ENCODE measurements at regions of chr14 and their contacts with region 1.

Region 1: DNA sequence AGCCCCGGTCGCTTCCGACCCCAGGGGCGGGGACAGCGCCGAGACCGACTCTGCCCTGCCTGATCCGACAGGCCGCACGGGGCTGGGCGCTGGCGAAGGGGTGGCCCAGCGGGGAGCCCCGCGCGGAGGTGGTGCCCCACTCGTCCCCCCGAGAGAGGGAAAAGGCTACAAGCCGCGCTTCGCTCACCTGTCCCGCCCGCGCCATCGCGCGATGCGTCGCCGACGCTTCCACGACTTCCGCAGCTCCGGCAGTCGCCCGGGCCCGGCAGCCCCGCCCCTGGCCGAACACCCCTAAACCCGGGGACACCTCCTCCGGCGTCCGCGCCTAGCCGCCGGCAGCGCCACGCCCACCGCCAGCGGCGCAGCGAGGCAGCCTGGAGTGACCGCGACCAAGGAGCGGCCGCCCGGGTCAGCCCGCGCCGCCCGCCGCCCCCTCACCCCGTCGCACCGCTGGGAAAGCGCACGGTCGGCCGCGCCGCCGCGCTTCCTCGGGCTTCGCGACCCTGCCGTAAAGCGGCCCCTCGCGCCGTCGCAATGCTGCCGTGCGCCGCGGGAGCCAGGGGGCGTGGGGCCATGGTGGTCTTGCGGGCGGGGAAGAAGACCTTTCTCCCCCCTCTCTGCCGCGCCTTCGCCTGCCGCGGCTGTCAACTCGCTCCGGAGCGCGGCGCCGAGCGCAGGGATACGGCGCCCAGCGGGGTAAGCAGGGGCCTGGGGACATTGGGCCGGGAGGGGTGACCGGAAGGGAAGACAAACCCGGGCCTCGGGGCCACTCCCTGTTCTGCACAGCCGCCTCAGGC is at the starts of genes BAG5 and COA8:
- DNase-seq: peak; percentile 86 to 98
- H3K4me3 ChIP-seq: peak within 1 kb of the TSS; percentile 87
- H3K27ac ChIP-seq: peak within 1 kb of the TSS; percentile 76
- H3K4me1 ChIP-seq: peaks cover 49% of the 10 kb centered on the region
- H3K27me3 ChIP-seq: no peaks in the 10 kb centered on the region
- CTCF ChIP-seq: peak; percentile 31; the same call in 1 of the 2 replicates
- total RNA-seq, gene BAG5: 61.5 and 76.5 TPM in 2 replicates
- total RNA-seq, gene COA8: 93.8 and 101 TPM in 2 replicates

Region 2: GRCh38 chr14:101908795-101909194 is 1653.8 kb before region 1 on chr14:
- CTCF ChIA-PET with region 1: no interaction called
- POLR2A ChIA-PET with region 1: no interaction called
- intact Hi-C with region 1: no loop called
- DNase-seq: no peak
- H3K4me3 ChIP-seq: no peak overlapping the region
- H3K27ac ChIP-seq: no peak overlapping the region
- H3K4me1 ChIP-seq: no peaks in the 10 kb centered on the region
- H3K27me3 ChIP-seq: no peaks in the 10 kb centered on the region
- CTCF ChIP-seq: no peak

Region 3: DNA sequence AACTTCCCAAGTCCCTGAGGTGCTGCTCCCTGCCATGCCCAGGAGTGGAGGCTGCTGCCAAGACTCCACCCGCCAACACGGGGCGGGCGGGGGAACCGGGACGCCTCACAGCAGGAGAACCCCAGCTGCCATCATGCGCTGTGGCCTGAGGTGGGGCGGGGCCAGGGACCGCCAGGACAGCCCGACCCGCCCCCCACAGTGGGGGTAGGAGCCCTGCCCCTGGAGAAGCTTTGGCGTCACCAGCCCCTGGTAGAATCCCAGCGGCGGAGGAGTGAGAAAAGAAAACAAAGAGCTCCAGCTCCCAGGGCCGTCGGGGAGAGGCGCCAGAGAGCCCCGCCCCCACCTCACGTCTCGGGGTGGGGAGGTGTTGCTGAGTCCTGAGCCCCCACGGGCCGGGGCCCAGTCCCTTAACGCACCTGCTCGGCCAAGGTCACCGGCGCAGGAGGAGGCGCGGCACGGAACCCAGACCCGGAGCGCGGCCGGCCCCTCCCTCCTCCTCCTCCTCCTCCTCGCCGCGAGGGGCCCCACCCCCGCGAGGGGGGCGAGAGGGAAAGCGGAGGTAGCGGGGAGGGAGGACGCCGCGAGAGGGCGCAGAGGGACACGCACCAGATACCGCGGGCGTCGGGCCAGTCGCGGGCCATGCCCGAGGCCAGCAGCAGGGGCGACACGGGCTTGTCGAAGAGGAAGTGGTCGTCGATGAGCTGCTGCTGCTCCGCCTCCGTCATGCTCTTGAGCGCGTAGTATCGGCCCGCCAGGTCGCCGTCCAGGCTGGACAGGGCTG is 41.8 kb before region 1 on chr14:
- CTCF ChIA-PET with region 1: interaction called, 6 read pairs
- POLR2A ChIA-PET with region 1: interaction called, 5 read pairs
- intact Hi-C with region 1: loop called (anchors 5 kb)
- DNase-seq: peak; percentile 82 to 95
- H3K4me3 ChIP-seq: peak overlapping the region; percentile 66
- H3K27ac ChIP-seq: peak overlapping the region; percentile 16
- H3K4me1 ChIP-seq: peaks cover 11% of the 10 kb centered on the region
- H3K27me3 ChIP-seq: no peaks in the 10 kb centered on the region
- CTCF ChIP-seq: peak; percentile 81

Region 4: DNA sequence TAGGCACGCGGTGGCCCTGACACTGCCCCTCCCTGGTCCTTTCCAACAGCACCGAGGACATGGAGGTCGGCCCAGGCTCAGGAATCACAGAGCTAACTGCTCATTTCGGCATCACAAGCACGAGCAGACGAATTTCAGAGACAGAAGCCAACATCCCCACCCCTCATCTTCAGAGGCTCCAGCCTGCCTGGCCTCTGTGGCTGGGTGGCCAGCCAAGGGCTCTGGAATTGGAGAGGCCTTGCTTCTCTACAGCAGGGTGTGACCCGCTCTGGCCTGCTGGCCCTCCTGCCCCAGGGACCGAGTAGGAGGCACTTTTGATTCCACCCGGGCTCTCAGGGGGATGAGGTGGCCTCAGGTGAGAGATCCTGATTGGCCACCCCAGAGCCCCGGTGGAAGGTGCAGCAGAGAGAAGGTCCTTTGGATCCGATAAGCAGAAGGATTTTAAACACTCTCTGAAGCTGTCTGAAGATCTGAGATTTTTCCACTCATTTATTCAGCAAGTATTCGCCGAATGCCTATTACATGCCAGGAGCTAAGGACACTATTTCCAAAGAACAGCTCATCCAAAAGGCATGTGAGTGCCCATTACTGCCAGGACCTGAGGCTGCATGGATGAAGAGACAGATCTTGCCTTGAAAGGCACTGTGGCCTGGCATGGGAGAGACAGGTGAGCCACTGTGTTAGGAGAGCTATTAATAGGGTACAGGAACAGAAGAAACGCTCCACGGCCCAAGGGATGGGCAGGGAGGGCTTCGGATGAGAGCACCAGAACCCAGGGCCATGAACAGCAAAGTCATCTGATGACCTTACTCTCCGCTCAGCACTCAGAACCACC is 10.4 kb before region 1 on chr14:
- CTCF ChIA-PET with region 1: interaction called, 10 read pairs
- POLR2A ChIA-PET with region 1: interaction called, 17 read pairs
- intact Hi-C with region 1: loop called (anchors 1 kb)
- DNase-seq: peak; percentile 73 to 78
- H3K4me3 ChIP-seq: no peak overlapping the region
- H3K27ac ChIP-seq: 0 out of 2 replicates have a peak overlapping the region, but pooled peaks have one; percentile 1
- H3K4me1 ChIP-seq: peaks cover 12% of the 10 kb centered on the region; the same call in 1 of the 2 replicates
- H3K27me3 ChIP-seq: no peaks in the 10 kb centered on the region
- CTCF ChIP-seq: no peak

Region 5: DNA sequence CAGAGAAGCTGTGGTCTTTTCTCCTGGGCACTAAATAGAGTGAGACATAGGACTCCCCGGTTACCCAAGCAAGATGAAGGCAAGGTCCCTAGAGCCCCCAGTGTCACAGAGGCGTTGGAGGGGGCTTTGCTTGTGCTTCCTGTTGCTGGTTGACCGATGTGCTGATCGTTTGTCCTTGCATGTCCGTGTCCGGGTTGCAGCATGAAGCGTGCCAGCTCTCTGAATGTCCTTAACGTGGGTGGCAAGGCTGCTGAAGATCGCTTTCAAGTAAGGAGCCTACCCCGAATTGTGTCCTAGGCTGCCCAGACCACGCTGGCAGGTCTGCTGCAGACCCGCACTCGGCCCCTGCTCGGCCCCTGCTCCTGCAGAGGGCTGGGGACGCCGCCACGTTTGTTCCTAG is 129.5 kb after region 1 on chr14:
- CTCF ChIA-PET with region 1: no interaction called
- POLR2A ChIA-PET with region 1: interaction called, 8 read pairs
- intact Hi-C with region 1: loop called (anchors 5 kb)
- DNase-seq: no peak
- H3K4me3 ChIP-seq: no peak overlapping the region
- H3K27ac ChIP-seq: no peak overlapping the region
- H3K4me1 ChIP-seq: peaks cover 15% of the 10 kb centered on the region
- H3K27me3 ChIP-seq: no peaks in the 10 kb centered on the region
- CTCF ChIP-seq: no peak